Posterior vena cava (tissue), 2 donors: ENCODE measurements at regions of chr3 and their contacts with region 1.

Region 1: GRCh38 chr3:151439652-151440129 is 21.2 kb downstream of the IGSF10 start:
- DNase-seq: no peak

Region 2: DNA sequence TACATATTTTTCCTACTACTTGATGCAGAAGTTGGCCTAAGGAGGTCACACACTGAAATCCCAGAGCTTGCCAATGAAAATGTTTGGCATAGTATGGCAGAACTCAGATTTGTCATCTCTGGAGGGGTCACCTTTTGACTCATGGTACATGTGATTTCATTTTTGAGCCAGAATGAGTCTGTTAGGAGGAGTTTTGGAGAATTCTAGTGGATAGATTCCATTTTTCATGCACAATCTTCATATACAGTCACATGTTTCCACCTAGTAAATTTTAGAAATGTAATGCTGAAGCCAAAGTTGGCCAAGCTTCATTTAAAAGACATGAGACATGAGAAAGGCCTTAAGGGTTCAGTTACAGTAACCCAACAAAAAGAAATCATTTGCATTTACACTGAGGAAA is 119.0 kb after region 1 on chr3:
- intact Hi-C with region 1: no loop called
- DNase-seq: no peak

Region 3: GRCh38 chr3:151660885-151661284 is 221.2 kb after region 1 on chr3:
- intact Hi-C with region 1: loop called in 1 of 2 experiments (anchors 10 kb)
- DNase-seq: no peak

Region 4: DNA sequence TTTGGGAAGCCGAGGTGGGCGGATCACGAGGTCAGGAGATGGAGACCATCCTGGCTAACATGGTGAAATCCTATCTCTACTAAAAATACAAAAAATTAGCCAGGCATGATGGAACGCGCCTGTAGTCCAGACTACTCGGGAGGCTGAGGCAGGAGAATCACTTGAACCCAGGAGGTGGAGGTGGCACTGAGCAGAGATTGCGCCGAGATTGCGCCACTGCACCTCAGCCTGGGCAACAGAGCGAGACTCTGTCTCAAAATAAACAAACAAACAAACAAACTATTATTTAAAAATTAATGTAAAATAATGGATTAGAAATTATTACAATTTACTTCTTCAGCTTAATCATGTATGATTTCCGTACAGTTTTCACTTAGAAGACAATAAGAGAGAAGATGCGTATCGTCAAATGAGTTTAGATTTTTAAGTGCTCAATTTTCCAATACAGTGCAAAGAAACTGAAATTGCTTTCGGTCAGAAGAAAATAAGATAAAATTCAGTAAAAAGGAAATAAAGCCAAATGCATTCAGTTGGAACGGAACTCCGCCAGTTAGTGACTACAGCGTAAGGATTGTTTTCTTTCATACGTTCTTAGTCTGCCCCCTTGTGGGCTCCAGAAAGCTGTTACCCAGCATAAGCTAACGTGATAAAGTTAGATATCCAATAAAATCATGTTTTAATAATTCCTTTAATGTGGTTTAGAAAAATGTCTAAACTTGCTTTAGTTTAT is 399.1 kb after region 1 on chr3:
- intact Hi-C with region 1: loop called (anchors 5 to 10 kb)
- DNase-seq: no peak

Region 5: GRCh38 chr3:151918253-151919029 is 478.8 kb after region 1 on chr3:
- intact Hi-C with region 1: loop called in 1 of 2 experiments (anchors 5 kb)
- DNase-seq: no peak